HEK293 (cell line): ENCODE measurements at regions of chr22 and their contacts with region 1.

Region 1: DNA sequence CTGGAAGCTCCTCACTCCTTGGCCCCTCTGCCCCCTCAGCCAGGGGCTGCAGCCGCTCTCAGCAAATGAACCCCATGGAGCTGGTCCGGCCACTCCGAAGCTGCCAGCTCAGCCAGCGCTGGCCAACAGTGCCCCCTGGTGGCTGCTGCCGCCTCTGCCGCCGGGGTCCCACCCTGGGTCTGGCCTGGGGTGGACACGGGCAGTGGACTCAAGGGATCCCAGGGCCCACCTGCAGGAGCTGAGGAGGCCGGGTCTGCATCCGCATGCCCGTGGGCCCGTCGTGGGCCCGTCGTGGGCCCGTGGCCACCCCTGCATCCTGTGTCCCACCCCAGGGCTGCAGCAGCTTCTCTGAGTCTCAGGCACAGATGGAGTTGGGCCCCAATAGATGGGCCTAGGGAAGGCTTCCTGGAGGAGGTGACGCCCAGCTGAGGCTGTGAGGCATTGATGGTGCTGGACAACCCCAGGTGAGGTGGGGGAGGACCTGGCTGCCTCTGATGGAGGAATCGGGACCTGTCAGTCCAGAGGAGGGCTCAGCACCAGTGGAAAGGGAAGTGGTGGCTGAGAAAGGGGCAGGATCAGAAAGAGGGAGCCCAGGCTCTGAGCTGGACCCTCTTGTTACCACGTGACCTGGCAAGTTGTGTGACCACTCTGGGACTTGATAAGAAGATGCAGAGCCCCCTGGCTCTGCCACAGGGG is 522.3 kb downstream of the BRD1 start:
- H3K4me3 ChIP-seq: no peak overlapping the region
- H3K27ac ChIP-seq: no peak overlapping the region
- H3K4me1 ChIP-seq: no peaks in the 10 kb centered on the region
- CTCF ChIP-seq: peak; percentile 67

Region 2: GRCh38 chr22:48782811-48783511 is 522.4 kb before region 1 on chr22:
- CTCF ChIA-PET with region 1: interaction called, 15 read pairs
- POLR2A ChIA-PET with region 1: no interaction called
- H3K4me3 ChIP-seq: no peak overlapping the region
- H3K27ac ChIP-seq: no peak overlapping the region
- H3K4me1 ChIP-seq: no peaks in the 10 kb centered on the region
- CTCF ChIP-seq: no peak

Region 3: GRCh38 chr22:48979482-48979881 is 325.9 kb before region 1 on chr22:
- CTCF ChIA-PET with region 1: interaction called, 15 read pairs
- POLR2A ChIA-PET with region 1: no interaction called
- H3K4me3 ChIP-seq: no peak overlapping the region
- H3K27ac ChIP-seq: no peak overlapping the region
- H3K4me1 ChIP-seq: no peaks in the 10 kb centered on the region
- CTCF ChIP-seq: no peak

Region 4: DNA sequence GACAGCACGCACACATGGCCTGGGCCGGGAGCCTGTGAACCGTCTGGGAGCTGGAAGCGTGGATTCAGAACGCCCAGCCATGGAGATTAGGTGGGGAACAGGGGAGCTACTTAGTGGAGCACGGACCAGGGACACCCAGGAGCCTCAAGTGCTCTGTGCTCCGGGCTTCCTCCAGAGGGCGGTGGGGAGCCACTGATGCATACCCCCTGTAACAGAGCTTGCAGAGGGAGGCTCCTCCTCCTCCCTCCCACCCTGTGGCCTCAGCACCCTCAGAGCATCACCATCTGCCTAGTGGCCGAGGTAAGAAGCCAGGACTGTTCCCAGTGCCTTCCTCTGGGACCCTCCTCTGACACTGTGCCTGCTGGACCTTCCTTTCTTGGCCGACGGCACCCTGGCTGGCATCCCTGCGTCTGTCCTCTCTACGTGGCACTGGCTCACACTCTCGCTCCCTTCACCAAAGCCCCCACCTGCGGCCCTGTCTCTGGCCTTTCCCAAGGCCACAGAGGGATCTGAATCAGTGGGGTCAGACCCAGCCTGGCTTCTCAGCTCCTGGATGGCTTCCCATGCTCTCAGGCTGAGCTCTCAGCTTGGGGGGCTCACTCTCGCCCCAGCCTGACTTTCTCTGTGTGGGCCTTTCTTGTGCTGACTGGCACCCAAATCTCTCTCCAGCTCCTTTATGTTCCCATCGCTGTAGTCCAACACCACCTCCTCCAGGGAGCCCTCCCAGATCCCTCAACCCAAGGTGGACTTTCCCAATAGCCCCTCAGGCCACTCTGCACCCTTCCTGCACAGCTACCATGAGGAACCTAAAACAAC is 258.6 kb before region 1 on chr22:
- CTCF ChIA-PET with region 1: interaction called, 64 read pairs
- POLR2A ChIA-PET with region 1: interaction called, 3 read pairs
- H3K4me3 ChIP-seq: no peak overlapping the region
- H3K27ac ChIP-seq: no peak overlapping the region
- H3K4me1 ChIP-seq: no peaks in the 10 kb centered on the region
- CTCF ChIP-seq: peak; percentile 37; the same call in 1 of the 2 replicates

Region 5: DNA sequence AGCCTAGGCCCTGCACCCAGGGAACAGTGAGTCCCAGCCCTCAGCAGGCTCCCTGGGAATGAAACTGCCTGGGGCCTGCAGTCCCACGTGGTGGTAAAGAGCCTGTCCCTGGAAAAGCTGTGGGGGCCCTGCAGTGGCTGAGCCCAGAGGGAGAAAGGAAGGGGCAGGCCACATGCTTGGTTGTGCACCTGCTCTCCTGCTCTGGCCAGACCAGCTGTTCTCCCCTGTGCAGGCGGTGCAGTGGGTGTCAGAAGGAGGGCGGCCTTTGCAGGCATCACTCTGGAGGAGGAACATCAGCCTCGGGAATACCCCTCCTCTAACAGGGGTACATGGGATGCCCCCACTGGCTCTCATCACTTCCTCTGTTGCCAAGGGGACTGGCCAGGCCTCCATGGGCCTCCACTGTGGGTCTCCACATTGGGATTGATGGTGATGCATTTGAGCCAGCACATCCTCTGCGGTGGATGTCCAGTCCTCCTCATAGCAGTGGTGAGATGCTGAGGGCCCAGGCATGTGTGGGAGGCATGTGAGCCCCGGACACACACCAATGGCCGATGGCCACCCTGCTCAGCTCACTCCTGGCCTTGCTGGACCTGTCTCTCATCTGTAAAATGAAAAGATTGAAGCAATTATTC is 168.0 kb before region 1 on chr22:
- CTCF ChIA-PET with region 1: no interaction called
- POLR2A ChIA-PET with region 1: no interaction called
- H3K4me3 ChIP-seq: no peak overlapping the region
- H3K27ac ChIP-seq: no peak overlapping the region
- H3K4me1 ChIP-seq: no peaks in the 10 kb centered on the region
- CTCF ChIP-seq: no peak

Region 6: DNA sequence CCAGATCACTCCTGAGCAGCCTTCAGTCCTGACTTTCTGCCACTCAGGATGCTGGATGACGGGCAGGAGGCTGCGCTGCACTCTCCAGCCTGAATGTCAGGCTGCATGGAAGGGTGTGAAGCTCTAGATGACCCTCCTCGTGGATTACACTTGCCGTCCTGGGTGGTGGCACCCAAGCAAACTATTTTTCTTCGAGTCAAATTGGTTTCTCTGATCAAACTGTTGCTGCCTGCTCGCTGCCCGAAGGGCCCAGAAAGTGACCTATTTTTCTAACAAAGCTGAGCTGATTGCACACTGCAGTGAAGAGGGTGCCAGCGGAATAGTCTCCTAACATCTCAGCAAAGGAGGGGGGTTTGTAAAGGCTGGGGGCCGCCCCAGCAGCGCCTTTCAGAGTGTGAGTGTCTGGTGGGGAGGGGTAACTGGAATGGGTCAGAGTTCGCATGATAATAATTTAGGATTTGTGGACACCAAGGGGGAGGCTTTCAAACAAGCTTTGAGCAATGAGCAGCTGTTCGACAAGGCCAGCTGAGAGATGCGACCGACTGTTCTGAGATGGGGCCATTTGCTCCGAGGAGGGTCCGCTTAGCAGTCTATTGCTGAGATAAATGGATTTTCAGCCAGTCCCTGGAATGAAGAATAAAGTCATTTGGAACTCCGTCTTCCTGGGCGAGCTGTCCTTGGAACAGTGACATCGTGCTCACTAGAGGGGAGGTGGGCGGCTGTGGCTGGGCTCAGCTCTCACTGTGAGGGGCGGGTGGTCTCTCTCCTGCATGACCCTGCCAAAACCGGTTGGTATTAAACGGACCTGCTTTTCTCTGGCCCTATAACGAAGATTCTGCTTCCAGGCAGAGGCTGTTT is 15.3 kb before region 1 on chr22:
- CTCF ChIA-PET with region 1: interaction called, 14 read pairs
- POLR2A ChIA-PET with region 1: no interaction called
- H3K4me3 ChIP-seq: no peak overlapping the region
- H3K27ac ChIP-seq: no peak overlapping the region
- H3K4me1 ChIP-seq: no peaks in the 10 kb centered on the region
- CTCF ChIP-seq: no peak

Region 7: GRCh38 chr22:49317387-49317786 is 12.0 kb after region 1 on chr22:
- CTCF ChIA-PET with region 1: interaction called, 16 read pairs
- POLR2A ChIA-PET with region 1: no interaction called
- H3K4me3 ChIP-seq: no peak overlapping the region
- H3K27ac ChIP-seq: no peak overlapping the region
- H3K4me1 ChIP-seq: no peaks in the 10 kb centered on the region
- CTCF ChIP-seq: no peak